T-cell (primary cell): ENCODE measurements at regions of chr2 and their contacts with region 1.

Region 1: DNA sequence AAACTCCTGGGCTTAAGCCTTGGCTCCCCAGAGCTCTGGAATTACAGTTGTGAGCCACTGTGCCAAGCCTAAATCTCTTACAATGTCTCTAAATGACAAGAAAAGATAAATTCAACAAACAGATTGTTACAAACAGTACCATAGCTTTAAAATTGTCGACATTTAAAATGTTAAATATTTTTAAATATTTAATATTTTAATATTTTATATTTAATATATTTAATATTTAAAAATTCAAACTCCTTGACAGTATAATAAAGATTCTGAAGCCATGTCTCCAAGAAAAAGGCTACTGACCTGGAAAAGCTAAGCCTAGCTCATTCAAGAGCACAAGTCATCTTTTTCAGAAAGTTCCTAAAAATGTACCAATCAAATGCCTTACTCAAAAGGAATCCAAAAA is 75.3 kb downstream of the INPP5D start:
- DNase-seq: no peak
- ATAC-seq: no peak
- H3K4me3 ChIP-seq: no peak overlapping the region
- H3K4me3 Mint-ChIP-seq: no peak overlapping the region
- H3K27ac ChIP-seq: no peak overlapping the region
- H3K27ac Mint-ChIP-seq: no peak overlapping the region
- H3K4me1 ChIP-seq: peaks cover 0 to 10% of the 10 kb centered on the region in 2 experiments
- H3K4me1 Mint-ChIP-seq: peaks cover 14 to 18% (median 16%) of the 10 kb centered on the region in 3 donors
- H3K27me3 ChIP-seq: no peaks in the 10 kb centered on the region
- H3K27me3 Mint-ChIP-seq: no peaks in the 10 kb centered on the region

Region 2: DNA sequence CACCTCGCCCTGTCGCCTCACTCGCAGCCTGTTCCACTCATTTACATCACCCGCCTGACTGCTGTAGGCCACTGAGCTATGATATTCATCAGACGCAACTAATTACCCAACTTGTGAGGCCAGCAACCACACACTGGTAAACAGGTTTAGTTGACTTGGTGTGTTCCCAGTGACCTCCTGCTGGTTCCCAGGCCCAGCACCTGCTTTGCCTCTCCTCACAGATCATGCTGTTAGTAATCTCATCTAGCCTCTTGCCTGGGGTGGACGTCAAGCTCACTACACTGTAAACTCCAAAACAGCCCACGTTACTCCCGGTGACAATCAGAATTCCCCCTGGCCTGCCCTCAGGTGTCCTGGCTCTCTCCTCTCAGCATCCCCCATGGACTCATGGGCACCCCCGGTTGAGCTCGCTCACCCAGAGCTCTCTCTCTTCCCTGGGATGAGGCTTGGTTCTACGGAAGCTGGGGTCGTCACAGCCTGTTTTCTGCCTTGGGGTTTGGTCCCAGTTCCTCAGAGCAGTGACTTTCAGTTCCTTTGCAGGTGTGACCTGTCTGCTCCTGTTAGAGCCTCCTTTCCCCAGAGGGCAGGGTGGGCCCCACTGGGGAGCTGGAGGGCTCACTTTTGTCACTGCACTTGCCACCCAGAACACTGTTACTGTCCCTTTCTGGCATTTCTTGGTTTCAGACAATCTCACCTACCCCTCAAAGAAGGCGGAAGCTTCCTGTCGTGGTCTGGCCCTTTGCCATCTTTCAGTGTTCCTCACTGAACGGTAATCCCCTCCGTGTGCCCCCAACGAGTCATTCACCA is 35.0 kb before region 1 on chr2:
- CTCF ChIA-PET with region 1: interaction called in 1 of 2 experiments, 15 read pairs
- POLR2A ChIA-PET with region 1: interaction called in 1 of 2 experiments, 3 read pairs
- DNase-seq: peak in 34 of 35 experiments; percentile 42 to 87 (median 72)
- ATAC-seq: peak; percentile 74 to 81 (median 80)
- H3K4me3 ChIP-seq: peak overlapping the region in 1 of 2 donors; percentile 12
- H3K4me3 Mint-ChIP-seq: peak overlapping the region; percentile 51 to 88 (median 58)
- H3K27ac ChIP-seq: peak overlapping the region; percentile 54
- H3K27ac Mint-ChIP-seq: peak overlapping the region; percentile 84 to 90
- H3K4me1 ChIP-seq: peaks cover 17 to 67% of the 10 kb centered on the region in 2 experiments
- H3K4me1 Mint-ChIP-seq: peaks cover 77 to 84% (median 78%) of the 10 kb centered on the region in 3 donors
- H3K27me3 ChIP-seq: no peaks in the 10 kb centered on the region
- H3K27me3 Mint-ChIP-seq: no peaks in the 10 kb centered on the region

Region 3: DNA sequence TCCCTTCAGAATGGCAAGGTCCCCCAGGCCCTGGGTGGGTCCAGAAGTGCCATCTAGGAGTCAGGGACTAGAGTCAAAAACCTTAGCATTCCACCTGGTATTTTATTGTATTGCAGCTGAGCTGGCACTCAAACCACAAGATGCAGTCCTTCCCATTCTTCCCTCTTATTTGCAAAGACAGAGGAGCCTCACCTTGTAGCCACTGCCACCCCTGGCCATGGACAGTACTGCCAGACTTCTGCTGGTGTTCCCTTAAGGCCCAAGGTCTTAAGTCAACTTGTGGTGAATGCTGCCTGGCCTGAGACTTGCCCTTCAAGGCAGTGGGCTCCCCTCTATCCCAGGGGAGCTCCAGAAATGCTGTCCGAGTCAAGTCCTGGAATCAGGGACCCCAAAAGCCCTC is 507.7 kb after region 1 on chr2:
- CTCF ChIA-PET with region 1: no interaction called
- POLR2A ChIA-PET with region 1: no interaction called
- DNase-seq: no peak
- ATAC-seq: no peak
- H3K4me3 ChIP-seq: no peak overlapping the region
- H3K4me3 Mint-ChIP-seq: no peak overlapping the region
- H3K27ac ChIP-seq: no peak overlapping the region
- H3K27ac Mint-ChIP-seq: no peak overlapping the region
- H3K4me1 ChIP-seq: no peaks in the 10 kb centered on the region
- H3K4me1 Mint-ChIP-seq: peaks cover 8 to 13% (median 9%) of the 10 kb centered on the region in 3 donors
- H3K27me3 ChIP-seq: peaks cover 0 to 21% of the 10 kb centered on the region in 2 experiments
- H3K27me3 Mint-ChIP-seq: peaks cover 9 to 13% of the 10 kb centered on the region in 2 donors